B cell (primary cell): ENCODE measurements at regions of chr1 and their contacts with region 1.

Region 1: DNA sequence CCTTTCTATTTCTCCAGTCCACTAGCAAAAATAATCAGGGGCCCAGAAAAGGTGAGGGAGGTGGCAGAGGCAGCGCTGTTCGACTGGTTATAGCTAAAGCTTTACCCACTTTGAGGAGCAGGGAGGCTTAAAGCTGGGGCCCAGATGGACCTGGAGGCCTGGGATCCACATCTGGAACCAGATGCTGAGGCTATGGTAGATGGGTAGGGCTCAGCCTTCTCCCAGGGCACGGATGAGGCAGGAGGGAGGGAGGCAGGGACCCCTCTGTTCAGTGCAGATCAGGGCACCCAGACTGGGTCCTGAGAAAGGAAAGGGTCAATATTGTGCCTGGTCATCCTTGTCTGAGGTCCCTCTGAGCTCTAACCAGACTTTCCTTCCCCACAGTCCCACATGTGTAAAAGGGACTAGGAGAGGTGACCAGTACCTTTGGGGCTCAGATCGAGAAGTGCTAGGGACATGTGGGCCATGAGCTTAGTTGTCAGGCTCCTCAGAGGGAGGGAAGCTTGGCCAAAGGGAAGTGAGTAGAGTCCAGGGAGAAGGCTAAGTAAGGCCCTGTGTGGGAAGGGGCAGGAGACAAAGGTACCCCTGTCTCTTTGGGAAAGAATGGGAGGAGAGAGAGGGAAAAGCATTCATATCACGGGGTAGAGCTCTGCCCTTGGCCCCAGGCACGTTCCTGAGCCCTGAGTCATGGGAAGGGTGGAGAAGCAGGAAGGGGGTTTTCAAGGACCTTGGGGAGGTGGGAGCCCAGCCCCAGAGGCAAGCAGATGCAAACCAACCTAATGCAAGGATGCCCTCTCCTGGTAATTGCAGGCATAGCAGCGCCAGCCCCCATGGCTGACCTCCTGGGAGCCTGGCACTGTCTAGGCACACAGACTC is 15.4 kb downstream of the LMNA start:
- DNase-seq: peak; percentile 84
- ATAC-seq: peak; percentile 69
- H3K4me3 ChIP-seq: no peak overlapping the region
- H3K4me3 Mint-ChIP-seq: no peak overlapping the region
- H3K27ac ChIP-seq: no peak overlapping the region
- H3K27ac Mint-ChIP-seq: peak overlapping the region; percentile 26
- H3K4me1 ChIP-seq: peaks cover 14 to 21% of the 10 kb centered on the region in 2 donors
- H3K4me1 Mint-ChIP-seq: peaks cover 28% of the 10 kb centered on the region
- H3K27me3 ChIP-seq: peaks cover 0 to 4% (median 1%) of the 10 kb centered on the region in 4 experiments
- H3K27me3 Mint-ChIP-seq: peaks cover 2% of the 10 kb centered on the region
- CTCF ChIP-seq: peak; percentile 95

Region 2: GRCh38 chr1:155424091-155424490 is 705.9 kb before region 1 on chr1:
- CTCF ChIA-PET with region 1: no interaction called
- POLR2A ChIA-PET with region 1: no interaction called
- intact Hi-C with region 1: no loop called
- DNase-seq: no peak
- ATAC-seq: no peak
- H3K4me3 ChIP-seq: no peak overlapping the region
- H3K4me3 Mint-ChIP-seq: no peak overlapping the region
- H3K27ac ChIP-seq: no peak overlapping the region
- H3K27ac Mint-ChIP-seq: no peak overlapping the region
- H3K4me1 ChIP-seq: no peaks in the 10 kb centered on the region
- H3K4me1 Mint-ChIP-seq: peaks cover 1% of the 10 kb centered on the region
- H3K27me3 ChIP-seq: no peaks in the 10 kb centered on the region
- H3K27me3 Mint-ChIP-seq: no peaks in the 10 kb centered on the region
- CTCF ChIP-seq: no peak

Region 3: DNA sequence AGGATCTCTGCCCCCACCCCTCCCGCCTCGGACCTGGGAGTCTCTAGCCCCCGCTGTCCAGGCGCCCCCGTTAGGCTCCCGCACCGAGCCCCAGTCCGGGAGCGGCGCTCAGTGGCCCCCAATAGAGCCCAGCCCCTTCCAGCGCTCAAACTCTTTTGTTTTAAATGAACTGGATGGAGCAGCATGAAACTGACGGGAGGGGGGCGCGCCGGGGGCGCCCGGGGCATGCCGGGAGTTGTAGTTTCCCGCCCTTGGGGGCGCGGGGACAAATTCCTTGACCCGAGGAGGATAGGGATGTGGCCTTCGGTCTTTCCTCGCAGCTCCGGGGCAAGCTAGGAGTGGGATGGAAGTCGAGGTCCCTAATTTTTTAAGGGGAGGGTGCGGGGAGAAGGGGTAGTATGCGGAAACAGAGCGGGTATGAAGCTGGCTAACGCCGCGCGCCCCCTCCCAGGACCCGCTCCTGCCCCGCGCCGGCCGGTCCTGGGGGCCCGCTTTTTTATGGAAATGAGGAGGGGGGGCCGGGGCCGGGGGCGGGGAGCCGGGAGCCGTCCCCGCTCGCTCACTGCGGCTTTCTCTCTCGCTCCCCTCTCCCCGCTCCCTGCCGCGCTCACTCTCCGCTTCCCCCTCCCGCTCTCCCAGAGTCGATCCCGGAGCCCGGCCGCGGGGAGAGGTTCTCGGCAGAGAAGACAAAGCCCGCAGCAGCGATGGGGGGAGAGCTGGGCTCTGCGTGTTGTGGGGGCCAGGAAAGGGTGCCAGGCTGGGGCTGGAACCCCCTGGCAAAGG is 47.4 kb before region 1 on chr1 and contains the start of gene MEX3A:
- CTCF ChIA-PET with region 1: interaction called, 970 read pairs
- POLR2A ChIA-PET with region 1: interaction called, 10 read pairs
- intact Hi-C with region 1: no loop called
- DNase-seq: peak; percentile 74
- ATAC-seq: peak; percentile 85
- H3K4me3 ChIP-seq: peak within 1 kb of the TSS; percentile 44 to 87 (median 81)
- H3K4me3 Mint-ChIP-seq: peak within 1 kb of the TSS; percentile 91
- H3K27ac ChIP-seq: peak within 1 kb of the TSS in 1 of 2 donors; percentile 26
- H3K27ac Mint-ChIP-seq: peak within 1 kb of the TSS; percentile 63
- H3K4me1 ChIP-seq: peaks cover 11 to 18% of the 10 kb centered on the region in 2 donors
- H3K4me1 Mint-ChIP-seq: peaks cover 22% of the 10 kb centered on the region
- H3K27me3 ChIP-seq: peaks cover 0 to 49% (median 21%) of the 10 kb centered on the region in 4 experiments
- H3K27me3 Mint-ChIP-seq: peaks cover 12% of the 10 kb centered on the region
- CTCF ChIP-seq: no peak
- total RNA-seq, gene MEX3A: 0.73 and 1.1 TPM in 2 replicates

Region 4: GRCh38 chr1:156090822-156091188 is 39.1 kb before region 1 on chr1:
- CTCF ChIA-PET with region 1: interaction called, 970 read pairs
- POLR2A ChIA-PET with region 1: interaction called, 23 read pairs
- intact Hi-C with region 1: loop called (anchors 1 kb)
- DNase-seq: peak; percentile 91
- ATAC-seq: peak; percentile 96
- H3K4me3 ChIP-seq: no peak overlapping the region
- H3K4me3 Mint-ChIP-seq: no peak overlapping the region
- H3K27ac ChIP-seq: no peak overlapping the region
- H3K27ac Mint-ChIP-seq: peak overlapping the region; percentile 74
- H3K4me1 ChIP-seq: peaks cover 8 to 11% of the 10 kb centered on the region in 2 donors
- H3K4me1 Mint-ChIP-seq: peaks cover 6% of the 10 kb centered on the region
- H3K27me3 ChIP-seq: peaks cover 0 to 21% (median 7%) of the 10 kb centered on the region in 4 experiments
- H3K27me3 Mint-ChIP-seq: peaks cover 10% of the 10 kb centered on the region
- CTCF ChIP-seq: peak; percentile 91

Region 5: GRCh38 chr1:156104065-156104810 is 25.7 kb before region 1 on chr1:
- CTCF ChIA-PET with region 1: interaction called, 970 read pairs
- POLR2A ChIA-PET with region 1: interaction called, 3 read pairs
- intact Hi-C with region 1: loop called (anchors 2 kb)
- DNase-seq: peak; percentile 73
- ATAC-seq: no peak
- H3K4me3 ChIP-seq: no peak overlapping the region
- H3K4me3 Mint-ChIP-seq: peak overlapping the region; percentile 86
- H3K27ac ChIP-seq: peak overlapping the region in 1 of 2 donors; percentile 99
- H3K27ac Mint-ChIP-seq: peak overlapping the region; percentile 92
- H3K4me1 ChIP-seq: peaks cover 35 to 43% of the 10 kb centered on the region in 2 donors
- H3K4me1 Mint-ChIP-seq: peaks cover 55% of the 10 kb centered on the region
- H3K27me3 ChIP-seq: peaks cover 0 to 5% (median 2%) of the 10 kb centered on the region in 4 experiments
- H3K27me3 Mint-ChIP-seq: no peaks in the 10 kb centered on the region
- CTCF ChIP-seq: no peak

Region 6: DNA sequence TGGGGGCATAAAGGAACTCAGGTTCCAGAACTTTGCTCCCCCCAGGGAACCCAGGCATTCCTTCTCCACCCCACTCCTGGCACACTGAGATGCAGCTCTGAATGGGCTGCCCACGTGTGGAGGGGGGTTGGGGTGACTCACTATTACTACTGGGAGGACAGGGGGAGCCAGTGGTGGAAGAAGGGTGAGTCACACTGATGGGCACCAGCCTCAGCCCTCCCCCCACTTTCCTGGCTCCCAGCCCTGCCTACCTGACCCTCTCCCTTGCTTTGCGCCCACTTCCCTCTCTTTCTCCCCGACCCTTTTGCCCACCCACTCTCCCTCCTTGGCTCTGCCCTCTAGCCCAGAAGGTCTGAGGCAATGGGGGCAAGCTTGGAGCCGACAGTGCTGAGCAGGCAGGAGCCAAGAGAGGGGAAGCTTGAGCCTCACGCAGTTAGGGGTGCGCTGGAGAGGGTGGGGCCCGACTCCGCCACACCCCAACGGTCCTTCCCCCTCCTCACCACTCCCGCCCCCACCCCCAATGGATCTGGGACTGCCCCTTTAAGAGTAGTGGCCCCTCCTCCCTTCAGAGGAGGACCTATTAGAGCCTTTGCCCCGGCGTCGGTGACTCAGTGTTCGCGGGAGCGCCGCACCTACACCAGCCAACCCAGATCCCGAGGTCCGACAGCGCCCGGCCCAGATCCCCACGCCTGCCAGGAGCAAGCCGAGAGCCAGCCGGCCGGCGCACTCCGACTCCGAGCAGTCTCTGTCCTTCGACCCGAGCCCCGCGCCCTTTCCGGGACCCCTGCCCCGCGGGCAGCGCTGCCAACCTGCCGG is 15.6 kb before region 1 on chr1 and contains the start of gene LMNA:
- CTCF ChIA-PET with region 1: interaction called, 970 read pairs
- POLR2A ChIA-PET with region 1: interaction called, 10 read pairs
- intact Hi-C with region 1: loop called (anchors 1 kb)
- DNase-seq: peak; percentile 80
- ATAC-seq: peak; percentile 79
- H3K4me3 ChIP-seq: peak within 1 kb of the TSS in 4 of 5 experiments; percentile 45 to 76 (median 64)
- H3K4me3 Mint-ChIP-seq: peak within 1 kb of the TSS; percentile 90
- H3K27ac ChIP-seq: peak within 1 kb of the TSS in 1 of 2 donors; percentile 64
- H3K27ac Mint-ChIP-seq: peak within 1 kb of the TSS; percentile 77
- H3K4me1 ChIP-seq: peaks cover 22 to 24% of the 10 kb centered on the region in 2 donors
- H3K4me1 Mint-ChIP-seq: peaks cover 30% of the 10 kb centered on the region
- H3K27me3 ChIP-seq: peaks cover 0 to 54% (median 12%) of the 10 kb centered on the region in 4 experiments
- H3K27me3 Mint-ChIP-seq: peaks cover 34% of the 10 kb centered on the region
- CTCF ChIP-seq: no peak
- total RNA-seq, gene LMNA: 28.7 and 32.3 TPM in 2 replicates